Gastrocnemius medialis (tissue), 4 donors: ENCODE measurements at regions of chr17 and their contacts with region 1.

Region 1: GRCh38 chr17:43125133-43125966 is at the start of gene BRCA1:
- DNase-seq: peak; percentile 90 to 94
- ATAC-seq: peak; percentile 100
- H3K4me3 ChIP-seq: peak within 1 kb of the TSS; percentile 79 to 96 (median 86)
- H3K27ac ChIP-seq: peak within 1 kb of the TSS; percentile 65 to 85 (median 73)
- H3K4me1 ChIP-seq: peaks cover 4 to 12% of the 10 kb centered on the region in 2 donors
- H3K27me3 ChIP-seq: no peaks in the 10 kb centered on the region
- CTCF ChIP-seq: no peak
- POLR2A ChIP-seq: peak in 1 of 2 donors; percentile 21
- total RNA-seq, gene BRCA1: 2.8 to 4.8 (median 4.0) TPM

Region 2: DNA sequence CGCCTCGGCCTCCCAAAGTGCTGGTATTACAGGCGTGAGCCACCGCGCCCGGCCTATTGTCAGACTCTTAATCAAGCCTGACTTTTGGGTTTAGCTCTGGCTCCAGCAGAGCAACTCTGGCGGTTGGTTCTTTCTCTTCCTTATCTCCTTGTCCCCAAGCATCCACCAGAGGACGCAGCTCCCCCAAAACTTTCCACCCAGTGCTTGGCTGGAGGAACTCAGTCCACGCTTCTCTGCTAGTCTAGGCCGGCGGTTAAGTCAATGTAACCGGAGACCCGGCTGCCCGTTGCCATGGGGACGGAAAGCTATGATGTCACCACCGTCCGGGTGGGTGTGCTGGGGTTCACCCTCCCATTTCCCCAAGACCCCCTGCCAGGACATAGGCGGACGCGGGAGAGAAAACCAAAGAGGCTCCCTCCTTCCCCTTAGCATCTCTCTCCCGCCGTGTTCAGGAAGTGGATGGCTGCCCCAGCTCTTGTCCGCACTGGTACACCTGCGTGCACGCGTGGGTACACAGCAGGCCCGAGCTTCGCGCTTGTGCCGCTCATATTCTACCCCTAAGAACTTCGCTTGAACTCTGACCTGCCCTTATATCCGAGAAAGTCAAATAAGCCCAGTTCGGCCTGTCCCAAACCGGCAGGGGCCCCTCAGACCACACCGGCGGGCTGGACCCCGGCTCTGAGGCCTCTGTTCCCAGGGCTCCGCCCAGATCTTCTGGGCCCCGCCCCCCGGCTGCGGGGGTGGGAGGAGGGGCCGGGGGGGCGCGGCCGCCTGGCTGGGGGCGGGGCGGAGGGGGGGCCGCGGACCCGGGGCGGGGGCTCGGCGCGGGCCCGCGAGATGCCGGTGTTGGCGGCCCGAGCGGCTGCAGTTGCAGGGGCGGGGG is 100.7 kb before region 1 on chr17 and contains the start of gene RND2:
- in situ Hi-C with region 1: no loop called
- intact Hi-C with region 1: loop called (anchors 2 kb)
- DNase-seq: peak; percentile 70 to 84
- ATAC-seq: peak; percentile 65 to 67
- H3K4me3 ChIP-seq: peak within 1 kb of the TSS; percentile 58 to 78 (median 63)
- H3K27ac ChIP-seq: peak within 1 kb of the TSS; percentile 44 to 64 (median 60)
- H3K4me1 ChIP-seq: peaks cover 14 to 17% of the 10 kb centered on the region in 2 donors
- H3K27me3 ChIP-seq: no peaks in the 10 kb centered on the region
- CTCF ChIP-seq: peak; percentile 54 to 70 (median 65)
- POLR2A ChIP-seq: peak; percentile 27 to 36
- total RNA-seq, gene RND2: 0.04 to 0.10 (median 0.10) TPM in 3 of 4 donors, not detected in the other

Region 3: GRCh38 chr17:43033948-43034881 is 91.1 kb before region 1 on chr17:
- in situ Hi-C with region 1: loop called in 1 of 4 experiments (anchors 10 kb)
- intact Hi-C with region 1: no loop called
- DNase-seq: no peak
- ATAC-seq: no peak
- H3K4me3 ChIP-seq: no peak overlapping the region
- H3K27ac ChIP-seq: no peak overlapping the region
- H3K4me1 ChIP-seq: peaks cover 3 to 4% of the 10 kb centered on the region in 2 donors
- H3K27me3 ChIP-seq: no peaks in the 10 kb centered on the region
- CTCF ChIP-seq: no peak
- POLR2A ChIP-seq: no peak

Region 4: DNA sequence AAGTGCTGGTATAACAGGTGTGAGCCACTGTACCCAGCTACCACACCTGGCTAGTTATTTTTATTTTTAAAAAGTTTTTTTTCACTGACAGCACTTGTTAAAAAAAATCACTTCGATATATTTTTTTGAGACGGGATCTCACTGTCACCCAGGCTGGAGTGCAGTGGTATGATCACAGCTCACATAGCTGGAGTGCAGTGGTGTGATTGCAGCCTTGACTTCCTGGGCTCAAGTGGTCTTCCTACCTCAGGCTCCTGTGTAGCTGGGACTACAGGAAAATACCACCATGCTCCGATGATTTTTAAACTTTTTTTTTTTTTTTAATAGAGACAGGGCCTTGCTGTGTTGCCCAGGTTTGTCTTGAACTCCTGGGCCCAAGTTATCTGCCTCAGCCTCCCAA is 58.6 kb after region 1 on chr17:
- in situ Hi-C with region 1: loop called in 1 of 4 experiments (anchors 10 kb)
- intact Hi-C with region 1: no loop called
- DNase-seq: no peak
- ATAC-seq: no peak
- H3K4me3 ChIP-seq: no peak overlapping the region
- H3K27ac ChIP-seq: no peak overlapping the region
- H3K4me1 ChIP-seq: no peaks in the 10 kb centered on the region
- H3K27me3 ChIP-seq: no peaks in the 10 kb centered on the region
- CTCF ChIP-seq: no peak
- POLR2A ChIP-seq: no peak